ENCODE measurements at regions of chr13 and their contacts with region 1.

Region 1: GRCh38 chr13:27968316-27969081 is 616 bp downstream of the CDX2 start:
- DNase-seq: peak; percentile 38
- ATAC-seq: peak; percentile 12
- H3K4me3 Mint-ChIP-seq: no peak overlapping the region
- H3K27ac Mint-ChIP-seq: no peak overlapping the region
- H3K4me1 Mint-ChIP-seq: peaks cover 24% of the 10 kb centered on the region
- H3K27me3 Mint-ChIP-seq: peaks cover 73% of the 10 kb centered on the region

Region 2: GRCh38 chr13:27919934-27920676 is 48.4 kb before region 1 on chr13 and contains the start of gene PDX1:
- CTCF ChIA-PET with region 1: interaction called, 4 read pairs
- POLR2A ChIA-PET with region 1: no interaction called
- intact Hi-C with region 1: loop called (anchors 1 to 2 kb)
- DNase-seq: no peak
- ATAC-seq: peak; percentile 28
- H3K4me3 Mint-ChIP-seq: peak within 1 kb of the TSS; percentile 67
- H3K27ac Mint-ChIP-seq: no peak within 1 kb of the TSS
- H3K4me1 Mint-ChIP-seq: peaks cover 26% of the 10 kb centered on the region
- H3K27me3 Mint-ChIP-seq: peaks cover 68% of the 10 kb centered on the region
- total RNA-seq, gene PDX1: not detected

Region 3: GRCh38 chr13:28031220-28031895 is 62.9 kb after region 1 on chr13:
- CTCF ChIA-PET with region 1: no interaction called
- POLR2A ChIA-PET with region 1: no interaction called
- intact Hi-C with region 1: no loop called
- DNase-seq: no peak
- ATAC-seq: no peak
- H3K4me3 Mint-ChIP-seq: no peak overlapping the region
- H3K27ac Mint-ChIP-seq: no peak overlapping the region
- H3K4me1 Mint-ChIP-seq: peaks cover 4% of the 10 kb centered on the region
- H3K27me3 Mint-ChIP-seq: peaks cover 15% of the 10 kb centered on the region